Naive thymus-derived CD8-positive, alpha-beta T cell (primary cell): ENCODE measurements at regions of chr17 and their contacts with region 1.

Region 1: GRCh38 chr17:50872710-50873424 is 6.7 kb upstream of the TOB1 start:
- DNase-seq: peak in 9 of 10 donors; percentile 30 to 75 (median 41)
- ATAC-seq: peak; percentile 64 to 78
- H3K4me3 Mint-ChIP-seq: peak overlapping the region in 7 of 10 donors; percentile 11 to 87 (median 48)
- H3K27ac Mint-ChIP-seq: peak overlapping the region; percentile 16 to 95 (median 70)
- H3K4me1 Mint-ChIP-seq: peaks cover 22 to 53% (median 51%) of the 10 kb centered on the region in 4 donors
- H3K27me3 Mint-ChIP-seq: no peaks in the 10 kb centered on the region

Region 2: GRCh38 chr17:50816771-50817751 is 55.8 kb before region 1 on chr17:
- POLR2A ChIA-PET with region 1: no interaction called
- DNase-seq: peak; percentile 29 to 78 (median 59)
- ATAC-seq: peak; percentile 85 to 96
- H3K4me3 Mint-ChIP-seq: peak overlapping the region in 4 of 10 donors; percentile 5 to 27 (median 21)
- H3K27ac Mint-ChIP-seq: peak overlapping the region in 1 of 10 donors; percentile 14
- H3K4me1 Mint-ChIP-seq: peaks cover 0 to 6% (median 3%) of the 10 kb centered on the region in 4 donors
- H3K27me3 Mint-ChIP-seq: peaks cover 0 to 11% (median 9%) of the 10 kb centered on the region in 5 donors

Region 3: DNA sequence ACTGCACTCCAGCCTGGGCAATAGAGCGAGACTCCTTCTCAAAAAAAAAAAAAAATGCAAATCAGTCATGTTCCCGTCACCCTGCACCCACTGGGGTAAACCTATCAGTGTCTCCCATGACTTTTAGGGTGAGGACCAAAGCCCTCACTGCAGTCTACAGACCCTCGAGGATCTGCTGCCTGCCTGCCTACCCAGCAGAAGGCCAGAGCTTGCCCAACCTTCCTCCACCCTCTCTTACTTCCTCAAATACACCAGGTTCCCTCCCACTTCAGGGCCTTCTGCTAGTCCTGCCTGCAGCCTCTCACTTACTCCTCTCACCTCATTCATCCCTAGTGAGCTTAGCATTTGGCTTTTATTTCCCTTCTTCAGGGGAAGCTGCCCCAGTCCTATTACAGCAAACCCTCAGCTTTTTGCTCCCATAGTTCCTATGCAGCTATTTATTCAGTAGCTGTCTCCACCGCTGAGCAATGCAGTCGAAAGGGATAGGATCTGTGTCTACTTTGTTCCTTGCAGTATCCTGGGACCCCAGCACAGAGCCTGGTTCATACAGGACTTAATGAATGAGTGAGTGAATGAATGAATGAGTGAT is 11.1 kb after region 1 on chr17:
- POLR2A ChIA-PET with region 1: interaction called, 74 read pairs
- DNase-seq: no peak
- ATAC-seq: peak in 1 of 2 donors; percentile 25
- H3K4me3 Mint-ChIP-seq: peak overlapping the region in 1 of 10 donors; percentile 31
- H3K27ac Mint-ChIP-seq: peak overlapping the region in 9 of 10 donors; percentile 19 to 92 (median 76)
- H3K4me1 Mint-ChIP-seq: peaks cover 21 to 46% (median 35%) of the 10 kb centered on the region in 4 donors
- H3K27me3 Mint-ChIP-seq: no peaks in the 10 kb centered on the region

Region 4: GRCh38 chr17:50919321-50920085 is 46.6 kb after region 1 on chr17:
- POLR2A ChIA-PET with region 1: interaction called, 544 read pairs
- DNase-seq: peak; percentile 62 to 98 (median 90)
- ATAC-seq: peak; percentile 89 to 90
- H3K4me3 Mint-ChIP-seq: peak overlapping the region; percentile 66 to 92 (median 82)
- H3K27ac Mint-ChIP-seq: peak overlapping the region; percentile 97 to 100 (median 99)
- H3K4me1 Mint-ChIP-seq: peaks cover 31 to 71% (median 60%) of the 10 kb centered on the region in 4 donors
- H3K27me3 Mint-ChIP-seq: no peaks in the 10 kb centered on the region

Region 5: DNA sequence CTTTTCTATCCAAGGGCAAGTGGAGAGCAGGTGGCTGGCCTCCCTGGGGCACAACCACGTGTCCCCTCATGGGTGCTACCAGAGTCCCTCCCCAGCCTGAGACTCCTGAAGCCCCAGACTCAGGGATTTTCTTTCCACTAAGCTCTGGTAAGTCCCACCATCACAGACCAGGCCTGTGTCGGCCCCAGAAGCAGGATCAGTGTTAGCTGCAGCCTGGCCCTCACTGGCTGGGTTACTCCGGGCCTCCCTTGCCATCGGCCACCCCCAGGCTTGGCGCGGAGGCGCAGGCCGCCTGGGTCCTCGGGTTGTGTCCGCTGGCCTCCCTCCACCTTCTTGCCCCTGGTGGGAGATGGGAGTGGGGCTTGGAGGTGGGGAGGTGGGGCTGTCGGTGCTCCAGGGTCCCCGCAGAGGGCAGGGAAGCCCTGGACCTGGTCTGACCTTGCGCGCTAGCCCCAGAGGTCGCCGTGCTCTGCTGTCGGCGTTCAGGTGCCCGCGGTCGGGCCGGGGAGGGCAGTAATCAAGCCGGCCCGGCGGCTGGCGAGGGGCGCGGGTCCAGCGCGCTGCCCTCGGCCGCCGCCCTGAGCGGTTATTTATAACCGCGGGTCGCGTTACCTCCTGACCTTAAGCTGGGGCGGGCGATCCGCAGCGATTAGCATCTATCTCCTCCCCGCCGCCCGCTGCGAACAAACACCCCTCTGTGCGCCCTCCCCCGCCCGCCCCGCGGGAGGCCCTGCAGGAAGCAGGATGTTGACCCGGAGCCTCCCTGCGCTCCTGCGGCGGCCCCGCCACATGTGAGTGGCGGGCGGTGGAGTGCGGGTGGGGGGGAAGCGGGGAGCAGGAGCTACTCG is 71.4 kb after region 1 on chr17:
- POLR2A ChIA-PET with region 1: interaction called, 535 read pairs
- DNase-seq: peak; percentile 54 to 89 (median 74)
- ATAC-seq: peak; percentile 87
- H3K4me3 Mint-ChIP-seq: peak overlapping the region; percentile 77 to 89 (median 84)
- H3K27ac Mint-ChIP-seq: peak overlapping the region; percentile 91 to 96 (median 94)
- H3K4me1 Mint-ChIP-seq: peaks cover 31 to 62% (median 52%) of the 10 kb centered on the region in 4 donors
- H3K27me3 Mint-ChIP-seq: no peaks in the 10 kb centered on the region

Region 6: GRCh38 chr17:50976951-50977472 is 104.1 kb after region 1 on chr17:
- POLR2A ChIA-PET with region 1: no interaction called
- DNase-seq: no peak
- ATAC-seq: no peak
- H3K4me3 Mint-ChIP-seq: peak overlapping the region in 1 of 10 donors; percentile 16
- H3K27ac Mint-ChIP-seq: peak overlapping the region in 2 of 10 donors; percentile 25 to 61
- H3K4me1 Mint-ChIP-seq: peaks cover 5 to 9% (median 7%) of the 10 kb centered on the region in 4 donors
- H3K27me3 Mint-ChIP-seq: no peaks in the 10 kb centered on the region

Region 7: DNA sequence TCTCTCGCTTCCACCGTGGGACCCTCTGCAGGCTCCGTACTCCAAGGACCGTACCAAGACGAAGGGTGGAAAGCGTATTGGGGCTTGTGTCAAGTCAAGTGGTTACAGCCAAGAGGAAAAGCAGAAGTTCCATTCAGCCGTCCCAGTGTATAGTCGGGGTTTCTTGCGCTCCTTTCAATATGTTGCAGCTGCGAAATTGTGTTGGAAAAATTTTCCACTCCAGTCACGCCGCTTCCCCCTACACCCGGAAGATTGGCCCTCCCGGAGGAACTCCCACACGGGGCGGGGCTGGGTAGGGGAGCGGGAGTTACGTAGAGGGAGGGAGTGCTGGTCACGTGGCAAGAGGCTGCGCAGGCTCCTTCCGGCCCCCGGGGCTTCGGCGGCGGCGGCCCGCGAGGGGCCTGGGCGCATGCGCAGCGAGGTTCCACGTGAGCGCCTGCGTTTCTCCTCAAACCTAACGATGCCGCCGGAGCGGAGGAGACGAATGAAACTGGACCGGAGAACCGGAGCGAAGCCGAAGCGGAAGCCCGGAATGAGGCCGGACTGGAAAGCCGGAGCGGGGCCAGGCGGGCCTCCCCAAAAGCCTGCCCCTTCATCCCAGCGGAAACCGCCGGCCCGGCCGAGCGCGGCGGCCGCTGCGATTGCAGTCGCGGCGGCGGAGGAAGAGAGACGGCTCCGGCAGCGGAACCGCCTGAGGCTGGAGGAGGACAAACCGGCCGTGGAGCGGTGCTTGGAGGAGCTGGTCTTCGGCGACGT is 387.4 kb after region 1 on chr17 and contains the start of gene UTP18:
- POLR2A ChIA-PET with region 1: no interaction called
- DNase-seq: peak; percentile 94 to 99 (median 97)
- ATAC-seq: peak; percentile 84 to 87
- H3K4me3 Mint-ChIP-seq: peak within 1 kb of the TSS; percentile 85 to 99 (median 96)
- H3K27ac Mint-ChIP-seq: peak within 1 kb of the TSS; percentile 92 to 99 (median 98)
- H3K4me1 Mint-ChIP-seq: peaks cover 24 to 78% (median 65%) of the 10 kb centered on the region in 4 donors
- H3K27me3 Mint-ChIP-seq: no peaks in the 10 kb centered on the region
- polyA plus RNA-seq, gene UTP18: 42.5 to 70.8 (median 54.4) TPM